Breast epithelium (tissue), 4 donors: ENCODE measurements at regions of chr2 and their contacts with region 1.

Region 1: GRCh38 chr2:4255491-4255890 is 552.1 kb downstream of the DCDC2C start:
- DNase-seq: no peak
- H3K4me3 ChIP-seq: no peak overlapping the region
- H3K27ac ChIP-seq: no peak overlapping the region
- H3K4me1 ChIP-seq: no peaks in the 10 kb centered on the region
- H3K27me3 ChIP-seq: no peaks in the 10 kb centered on the region
- CTCF ChIP-seq: no peak
- POLR2A ChIP-seq: no peak

Region 2: GRCh38 chr2:4219571-4219970 is 35.9 kb before region 1 on chr2:
- intact Hi-C with region 1: loop called (anchors 1 kb)
- DNase-seq: no peak
- H3K4me3 ChIP-seq: no peak overlapping the region
- H3K27ac ChIP-seq: no peak overlapping the region
- H3K4me1 ChIP-seq: no peaks in the 10 kb centered on the region
- H3K27me3 ChIP-seq: no peaks in the 10 kb centered on the region
- CTCF ChIP-seq: no peak
- POLR2A ChIP-seq: no peak